CD4-positive, alpha-beta memory T cell (primary cell): ENCODE measurements at regions of chr5 and their contacts with region 1.

Region 1: DNA sequence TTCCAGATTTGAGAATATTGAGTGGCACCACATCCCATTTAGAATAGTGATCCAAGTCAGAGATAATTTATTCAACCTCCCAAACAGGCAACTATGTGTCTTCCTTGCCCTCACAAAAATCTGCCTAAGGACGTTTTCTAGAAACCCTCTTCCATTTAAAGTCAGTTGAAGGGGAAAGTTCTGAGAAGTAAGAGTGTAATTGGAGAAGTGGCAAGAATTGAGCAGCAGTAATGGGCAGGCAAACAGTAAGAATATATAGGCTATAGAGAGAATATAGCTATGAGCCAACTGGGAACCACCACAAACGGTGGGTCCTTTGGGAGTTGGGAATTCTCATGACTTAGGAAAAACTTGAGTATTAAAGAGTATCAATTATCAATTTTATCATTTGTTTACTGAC is 31.1 kb upstream of the CETN3 start:
- DNase-seq: no peak
- H3K4me3 ChIP-seq: no peak overlapping the region
- H3K4me3 Mint-ChIP-seq: peak overlapping the region in 5 of 8 donors; percentile 62 to 88 (median 81)
- H3K27ac ChIP-seq: no peak overlapping the region
- H3K27ac Mint-ChIP-seq: no peak overlapping the region
- H3K4me1 ChIP-seq: no peaks in the 10 kb centered on the region
- H3K4me1 Mint-ChIP-seq: peaks cover 0 to 7% (median 4%) of the 10 kb centered on the region in 4 donors
- H3K27me3 ChIP-seq: no peaks in the 10 kb centered on the region
- H3K27me3 Mint-ChIP-seq: peaks cover 7% of the 10 kb centered on the region in 2 donors

Region 2: DNA sequence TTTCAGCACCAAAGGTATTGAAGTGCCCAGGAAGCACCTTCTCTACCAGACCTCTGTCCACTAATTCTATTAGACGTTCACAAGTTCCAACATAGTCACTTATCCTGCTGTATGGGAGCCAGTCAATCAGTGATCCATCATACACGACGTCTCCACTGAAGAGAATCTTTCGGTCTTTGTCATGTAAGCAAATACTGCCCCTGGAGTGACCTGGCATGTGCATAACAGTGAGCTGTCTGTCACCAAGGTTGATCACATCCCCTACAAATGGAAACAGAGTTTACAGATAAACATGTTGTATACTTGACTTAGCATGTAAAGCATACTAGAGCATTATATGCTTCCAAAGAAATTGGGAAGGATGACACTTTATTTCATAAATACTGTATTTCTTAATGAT is 20.6 kb after region 1 on chr5:
- CTCF ChIA-PET with region 1: interaction called, 16 read pairs
- POLR2A ChIA-PET with region 1: interaction called, 3 read pairs
- intact Hi-C with region 1: no loop called
- DNase-seq: no peak
- H3K4me3 ChIP-seq: no peak overlapping the region
- H3K4me3 Mint-ChIP-seq: no peak overlapping the region
- H3K27ac ChIP-seq: no peak overlapping the region
- H3K27ac Mint-ChIP-seq: peak overlapping the region in 1 of 7 donors; percentile 23
- H3K4me1 ChIP-seq: no peaks in the 10 kb centered on the region
- H3K4me1 Mint-ChIP-seq: peaks cover 0 to 7% (median under 1%) of the 10 kb centered on the region in 4 donors
- H3K27me3 ChIP-seq: no peaks in the 10 kb centered on the region
- H3K27me3 Mint-ChIP-seq: no peaks in the 10 kb centered on the region

Region 3: GRCh38 chr5:90474235-90475109 is 33.8 kb after region 1 on chr5 and contains the starts of genes MBLAC2 and POLR3G:
- CTCF ChIA-PET with region 1: interaction called, 33 read pairs
- POLR2A ChIA-PET with region 1: interaction called, 3 read pairs
- intact Hi-C with region 1: loop called (anchors 2 kb)
- DNase-seq: peak; percentile 91 to 93 (median 92)
- H3K4me3 ChIP-seq: peak within 1 kb of the TSS; percentile 79 to 87
- H3K4me3 Mint-ChIP-seq: peak within 1 kb of the TSS; percentile 95 to 99 (median 99)
- H3K27ac ChIP-seq: peak within 1 kb of the TSS; percentile 66
- H3K27ac Mint-ChIP-seq: peak within 1 kb of the TSS; percentile 84 to 98 (median 95)
- H3K4me1 ChIP-seq: peaks cover 35% of the 10 kb centered on the region
- H3K4me1 Mint-ChIP-seq: peaks cover 24 to 46% (median 35%) of the 10 kb centered on the region in 4 donors
- H3K27me3 ChIP-seq: no peaks in the 10 kb centered on the region
- H3K27me3 Mint-ChIP-seq: no peaks in the 10 kb centered on the region
- total RNA-seq, gene MBLAC2: 14.7 to 16.1 TPM
- total RNA-seq, gene POLR3G: 1.2 to 1.5 TPM

Region 4: GRCh38 chr5:90606539-90606938 is 165.9 kb after region 1 on chr5:
- CTCF ChIA-PET with region 1: interaction called, 19 read pairs
- POLR2A ChIA-PET with region 1: no interaction called
- intact Hi-C with region 1: loop called (anchors 1 kb)
- DNase-seq: no peak
- H3K4me3 ChIP-seq: no peak overlapping the region
- H3K4me3 Mint-ChIP-seq: no peak overlapping the region
- H3K27ac ChIP-seq: no peak overlapping the region
- H3K27ac Mint-ChIP-seq: no peak overlapping the region
- H3K4me1 ChIP-seq: no peaks in the 10 kb centered on the region
- H3K4me1 Mint-ChIP-seq: no peaks in the 10 kb centered on the region
- H3K27me3 ChIP-seq: no peaks in the 10 kb centered on the region
- H3K27me3 Mint-ChIP-seq: peaks cover 9 to 10% of the 10 kb centered on the region in 2 donors